K562 (cell line): ENCODE measurements at regions of chr3 and their contacts with region 1.

Region 1: DNA sequence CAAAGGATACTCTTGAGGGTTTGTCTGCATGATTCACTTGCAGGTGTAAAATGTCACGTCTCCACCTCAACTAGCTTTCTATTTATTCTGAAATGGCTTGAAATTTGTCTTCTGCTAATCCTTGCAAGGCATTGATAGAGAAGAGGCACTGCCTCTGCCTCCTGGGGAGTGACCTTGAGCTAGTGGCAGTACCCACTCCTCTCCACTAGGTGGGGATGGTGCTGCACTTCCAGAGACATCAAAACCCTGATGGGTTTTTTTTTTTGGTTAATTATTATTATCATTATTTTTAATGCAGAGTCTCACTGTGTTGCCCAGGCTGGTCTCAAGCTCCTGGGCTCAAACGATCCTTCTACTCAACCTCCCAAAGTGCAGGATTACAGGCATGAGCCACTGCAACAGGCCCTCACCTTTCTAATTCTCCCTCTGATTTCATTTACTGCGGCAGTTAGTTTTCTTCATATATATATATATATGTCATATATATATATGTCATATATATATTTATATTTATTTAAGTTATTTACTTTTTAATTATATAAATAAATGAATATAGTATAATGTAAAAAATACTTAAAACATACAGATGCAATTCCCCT is 117.6 kb upstream of the EIF1B start:
- DNase-seq: peak; percentile 78 to 83 (median 81)
- ATAC-seq: peak; percentile 83
- H3K4me3 ChIP-seq: no peak overlapping the region
- H3K27ac ChIP-seq: no peak overlapping the region
- H3K4me1 ChIP-seq: peaks cover 3 to 9% of the 10 kb centered on the region in 2 experiments; a peak in 2 of 5 replicates
- H3K27me3 ChIP-seq: peaks cover 0 to 34% of the 10 kb centered on the region in 2 experiments; a peak in 2 of 5 replicates
- CTCF ChIP-seq: peak; percentile 87 to 98 (median 91)
- EP300 ChIP-seq: no peak
- POLR2A ChIP-seq: no peak
- RAD21 ChIP-seq: peak; percentile 89 to 93

Region 2: GRCh38 chr3:40240921-40241320 is 49.0 kb after region 1 on chr3:
- CTCF ChIA-PET with region 1: interaction called, 4 read pairs
- POLR2A ChIA-PET with region 1: no interaction called
- in situ Hi-C with region 1: no loop called
- intact Hi-C with region 1: loop called (anchors 5 kb)
- DNase-seq: peak in 2 of 4 experiments; percentile 21 to 29
- ATAC-seq: peak; percentile 94
- H3K4me3 ChIP-seq: no peak overlapping the region
- H3K27ac ChIP-seq: no peak overlapping the region
- H3K4me1 ChIP-seq: no peaks in the 10 kb centered on the region
- H3K27me3 ChIP-seq: peaks cover 10 to 14% of the 10 kb centered on the region in 2 experiments; a peak in 3 of 5 replicates
- CTCF ChIP-seq: peak; percentile 28 to 58 (median 32); a peak in 4 of 6 replicates
- EP300 ChIP-seq: no peak
- POLR2A ChIP-seq: no peak
- RAD21 ChIP-seq: peak; percentile 20 to 49; a peak in 2 of 4 replicates

Region 3: GRCh38 chr3:40309418-40309924 is 117.5 kb after region 1 on chr3 and contains the start of gene EIF1B:
- CTCF ChIA-PET with region 1: interaction called, 90 read pairs
- POLR2A ChIA-PET with region 1: interaction called, 35 read pairs
- in situ Hi-C with region 1: no loop called
- intact Hi-C with region 1: no loop called
- DNase-seq: peak; percentile 97 to 100 (median 98)
- ATAC-seq: peak; percentile 88
- H3K4me3 ChIP-seq: peak within 1 kb of the TSS; percentile 91
- H3K27ac ChIP-seq: peak within 1 kb of the TSS; percentile 96
- H3K4me1 ChIP-seq: peaks cover 8 to 38% of the 10 kb centered on the region in 2 experiments
- H3K27me3 ChIP-seq: no peaks in the 10 kb centered on the region
- CTCF ChIP-seq: peak; percentile 95 to 98 (median 96)
- EP300 ChIP-seq: peak; percentile 64
- POLR2A ChIP-seq: peak; percentile 95
- RAD21 ChIP-seq: peak; percentile 64 to 74
- polyA plus RNA-seq, gene EIF1B: 178 to 184 TPM

Region 4: DNA sequence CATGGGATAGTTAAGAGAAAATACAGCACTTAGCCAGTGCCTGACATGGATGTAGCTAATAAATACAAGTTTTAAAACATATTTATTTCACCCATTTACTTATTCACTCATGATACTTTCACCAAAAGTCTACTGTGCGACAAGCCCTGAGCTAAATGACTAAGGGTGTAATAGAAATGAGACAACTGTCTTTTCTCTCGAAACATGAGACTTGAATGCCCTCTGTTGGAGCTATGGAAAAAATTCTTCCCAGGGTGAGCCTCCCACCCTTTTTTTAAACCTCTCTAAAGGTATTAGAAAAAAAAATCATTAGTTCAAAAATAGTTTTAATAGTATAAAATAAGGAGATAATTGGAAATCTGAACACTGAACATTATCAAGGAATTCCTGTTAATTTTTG is 240.8 kb after region 1 on chr3:
- CTCF ChIA-PET with region 1: interaction called, 8 read pairs
- POLR2A ChIA-PET with region 1: no interaction called
- in situ Hi-C with region 1: loop called (anchors 10 kb)
- intact Hi-C with region 1: loop called (anchors 2 kb)
- DNase-seq: peak in 3 of 4 experiments; percentile 37 to 61 (median 50)
- ATAC-seq: peak; percentile 87
- H3K4me3 ChIP-seq: no peak overlapping the region
- H3K27ac ChIP-seq: no peak overlapping the region
- H3K4me1 ChIP-seq: peaks cover 0 to 2% of the 10 kb centered on the region in 2 experiments; a peak in 1 of 5 replicates
- H3K27me3 ChIP-seq: no peaks in the 10 kb centered on the region
- CTCF ChIP-seq: peak; percentile 42 to 83 (median 45); a peak in 3 of 6 replicates
- EP300 ChIP-seq: no peak
- POLR2A ChIP-seq: no peak
- RAD21 ChIP-seq: peak; percentile 79 to 88

Region 5: GRCh38 chr3:40608091-40608490 is 416.1 kb after region 1 on chr3:
- CTCF ChIA-PET with region 1: no interaction called
- POLR2A ChIA-PET with region 1: no interaction called
- in situ Hi-C with region 1: no loop called
- intact Hi-C with region 1: no loop called
- DNase-seq: no peak
- ATAC-seq: no peak
- H3K4me3 ChIP-seq: no peak overlapping the region
- H3K27ac ChIP-seq: no peak overlapping the region
- H3K4me1 ChIP-seq: no peaks in the 10 kb centered on the region
- H3K27me3 ChIP-seq: peaks cover 9 to 11% of the 10 kb centered on the region in 2 experiments; a peak in 3 of 5 replicates
- CTCF ChIP-seq: no peak
- EP300 ChIP-seq: no peak
- POLR2A ChIP-seq: no peak
- RAD21 ChIP-seq: no peak

Region 6: DNA sequence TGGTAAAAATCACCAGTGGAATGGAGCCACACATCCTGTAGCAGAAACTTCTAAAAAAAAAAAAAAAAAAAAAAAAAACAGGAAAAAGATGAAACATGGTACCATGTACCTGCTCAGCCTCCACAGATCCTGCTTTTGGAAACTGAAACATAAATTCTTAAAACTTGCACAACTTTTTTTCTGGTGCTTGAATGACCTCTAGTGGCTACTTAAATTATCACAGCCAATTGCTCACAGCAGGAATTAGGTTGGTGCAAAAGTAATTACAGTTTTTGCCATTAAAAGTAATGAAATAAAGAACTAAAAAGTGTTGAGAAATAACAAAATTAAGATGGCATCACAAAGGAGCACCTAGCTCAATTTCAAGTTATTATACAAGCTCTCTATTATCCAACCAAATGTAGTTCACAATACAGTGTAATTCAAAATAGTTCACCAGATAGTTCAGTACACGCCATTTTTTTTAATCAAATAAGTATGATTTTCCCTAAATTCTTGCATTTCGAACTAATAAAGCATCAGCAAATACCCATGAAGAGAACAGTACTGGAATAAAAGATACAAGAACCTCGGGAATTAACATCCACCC is 1689.4 kb after region 1 on chr3:
- CTCF ChIA-PET with region 1: no interaction called
- POLR2A ChIA-PET with region 1: no interaction called
- in situ Hi-C with region 1: no loop called
- intact Hi-C with region 1: loop called (anchors 10 kb)
- DNase-seq: peak in 3 of 4 experiments; percentile 23 to 61 (median 25)
- ATAC-seq: no peak
- H3K4me3 ChIP-seq: no peak overlapping the region
- H3K27ac ChIP-seq: no peak overlapping the region
- H3K4me1 ChIP-seq: no peaks in the 10 kb centered on the region
- H3K27me3 ChIP-seq: peaks cover 0 to 6% of the 10 kb centered on the region in 2 experiments; a peak in 2 of 5 replicates
- CTCF ChIP-seq: peak; percentile 55 to 89 (median 56)
- EP300 ChIP-seq: no peak
- POLR2A ChIP-seq: no peak
- RAD21 ChIP-seq: peak; percentile 76 to 84